AG04449 (cell line): ENCODE measurements at regions of chr17 and their contacts with region 1.

Region 1: GRCh38 chr17:61551255-61551742 is 39.7 kb downstream of the NACA2 start:
- DNase-seq: peak; percentile 3
- H3K4me3 ChIP-seq: no peak overlapping the region
- CTCF ChIP-seq: peak; percentile 32

Region 2: GRCh38 chr17:61426013-61426730 is 125.1 kb before region 1 on chr17:
- CTCF ChIA-PET with region 1: interaction called, 188 read pairs
- POLR2A ChIA-PET with region 1: no interaction called
- DNase-seq: no peak
- H3K4me3 ChIP-seq: no peak overlapping the region
- CTCF ChIP-seq: peak; percentile 4

Region 3: DNA sequence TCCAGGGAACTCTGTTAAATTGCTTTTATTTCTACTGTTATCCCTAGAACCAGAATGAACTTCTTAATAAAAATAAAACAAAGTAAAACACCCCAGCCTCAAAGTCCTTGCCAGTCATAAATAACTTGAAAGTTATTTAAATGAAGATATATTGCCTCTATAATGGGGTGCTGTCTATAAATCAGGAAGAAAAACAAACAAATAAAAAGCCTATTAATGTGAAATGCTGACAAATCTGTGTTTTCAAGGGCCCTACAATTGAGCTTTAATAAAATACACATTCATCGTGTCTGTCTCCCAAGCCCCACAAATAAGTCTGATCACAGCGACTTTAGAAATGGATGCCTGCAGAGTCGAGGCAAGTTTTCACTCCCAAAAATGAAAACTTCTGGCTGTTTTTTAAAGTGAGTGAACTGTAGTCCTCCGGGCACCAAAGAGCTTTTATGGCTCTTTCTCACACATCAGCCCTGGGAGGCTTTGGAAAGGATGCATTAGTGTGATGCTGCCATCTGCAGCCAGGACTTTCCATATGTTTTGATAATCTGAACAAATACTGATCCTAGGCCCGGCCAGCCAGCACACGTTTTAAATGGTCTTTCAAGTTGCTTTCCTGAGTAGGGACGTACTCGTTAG is 23.4 kb after region 1 on chr17:
- CTCF ChIA-PET with region 1: interaction called, 10 read pairs
- POLR2A ChIA-PET with region 1: no interaction called
- DNase-seq: no peak
- H3K4me3 ChIP-seq: no peak overlapping the region
- CTCF ChIP-seq: peak; percentile 39